ENCODE measurements at regions of chr17 and their contacts with region 1.

Region 1: DNA sequence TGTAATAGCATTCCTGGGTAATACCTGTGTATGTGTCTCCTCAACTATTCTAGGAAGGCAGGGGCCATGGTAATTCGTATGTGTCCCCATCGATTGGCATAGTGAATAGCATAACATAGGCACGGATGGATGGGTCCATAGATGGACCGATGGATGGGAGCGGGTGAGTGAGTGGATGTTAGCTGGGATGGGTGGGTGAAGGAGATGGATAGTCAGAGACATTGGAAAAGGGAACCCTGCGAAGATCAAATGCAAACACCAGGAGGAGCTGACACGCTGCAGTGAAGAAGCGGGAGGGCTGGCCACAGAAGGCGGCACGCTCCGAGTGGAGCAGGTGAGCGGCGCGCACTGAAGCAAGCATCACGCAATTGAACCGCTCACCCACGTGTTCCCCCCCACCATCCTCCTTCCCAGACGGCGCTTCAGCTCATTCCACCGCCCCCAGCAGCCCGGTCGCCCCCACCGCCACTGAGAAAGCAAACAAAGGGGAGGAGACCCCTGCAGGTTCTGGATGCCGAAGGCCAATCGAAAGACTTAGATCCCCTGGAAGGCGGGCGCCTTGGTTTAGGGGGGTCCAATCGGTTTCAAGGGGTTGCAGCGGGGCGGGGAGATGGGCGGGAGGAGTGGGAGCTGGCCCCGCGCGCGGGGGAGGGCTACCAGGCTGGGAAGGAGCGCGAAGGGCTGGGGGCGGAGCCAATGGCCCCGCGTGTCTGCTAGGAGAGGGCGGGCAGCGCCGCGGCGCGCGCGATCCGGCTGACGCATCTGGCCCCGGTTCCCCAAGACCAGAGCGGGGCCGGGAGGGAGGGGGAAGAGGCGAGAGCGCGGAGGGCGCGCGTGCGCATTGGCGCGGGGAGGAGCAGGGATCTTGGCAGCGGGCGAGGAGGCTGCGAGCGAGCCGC is at the start of gene ARRB2:
- DNase-seq: peak; percentile 93
- ATAC-seq: peak; percentile 87
- H3K4me3 Mint-ChIP-seq: peak within 1 kb of the TSS; percentile 86
- H3K27ac Mint-ChIP-seq: peak within 1 kb of the TSS; percentile 83
- H3K4me1 Mint-ChIP-seq: peaks cover 43% of the 10 kb centered on the region
- H3K27me3 Mint-ChIP-seq: no peaks in the 10 kb centered on the region
- CTCF ChIP-seq: peak; percentile 27
- total RNA-seq, gene ARRB2: 45.1 and 52.0 TPM in 2 replicates

Region 2: GRCh38 chr17:4161179-4161559 is 548.9 kb before region 1 on chr17:
- CTCF ChIA-PET with region 1: no interaction called
- POLR2A ChIA-PET with region 1: no interaction called
- intact Hi-C with region 1: no loop called
- DNase-seq: no peak
- ATAC-seq: no peak
- H3K4me3 Mint-ChIP-seq: no peak overlapping the region
- H3K27ac Mint-ChIP-seq: no peak overlapping the region
- H3K4me1 Mint-ChIP-seq: peaks cover 11% of the 10 kb centered on the region
- H3K27me3 Mint-ChIP-seq: no peaks in the 10 kb centered on the region
- CTCF ChIP-seq: no peak

Region 3: DNA sequence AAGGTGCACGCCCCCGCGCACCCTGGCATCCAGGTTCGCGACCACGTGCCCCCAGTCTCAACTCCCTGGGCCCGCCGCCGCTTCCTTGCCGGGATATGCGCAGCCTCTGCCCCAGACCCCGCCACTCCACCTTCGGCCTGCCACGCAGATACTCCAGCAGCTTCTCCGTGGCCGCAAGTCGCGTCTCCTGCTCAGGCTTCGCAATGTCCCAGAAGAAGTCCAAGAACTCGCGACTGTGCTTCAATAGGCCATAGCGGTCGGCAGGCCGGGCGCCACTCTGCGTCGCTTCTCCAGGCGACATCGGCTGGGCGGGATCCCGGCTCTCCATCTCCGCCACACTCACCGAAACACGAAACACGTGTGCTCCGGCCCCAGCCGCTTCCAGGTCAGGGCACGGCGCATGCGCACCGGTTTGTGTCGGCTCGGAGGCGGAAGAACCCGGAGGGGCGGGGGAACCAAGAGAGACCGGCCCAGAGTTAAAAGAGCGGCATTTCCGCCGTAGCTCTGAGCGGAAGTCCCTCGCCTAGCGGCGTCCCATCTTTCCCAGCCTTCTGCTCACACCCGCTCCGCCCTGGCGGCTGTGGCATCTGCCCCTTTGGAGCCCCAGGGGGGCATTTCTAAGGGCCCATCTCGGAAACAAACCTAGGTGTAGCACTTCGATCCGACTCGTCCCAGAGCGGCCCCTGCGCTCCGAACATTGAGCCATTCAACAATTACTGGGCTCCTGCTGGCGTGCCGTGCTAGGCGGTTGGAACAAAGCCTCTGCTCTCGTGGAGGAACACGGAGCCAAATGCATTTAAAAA is 154.8 kb before region 1 on chr17 and contains the start of gene MYBBP1A:
- CTCF ChIA-PET with region 1: no interaction called
- POLR2A ChIA-PET with region 1: no interaction called
- intact Hi-C with region 1: loop called (anchors 2 kb)
- DNase-seq: peak; percentile 94
- ATAC-seq: peak; percentile 95
- H3K4me3 Mint-ChIP-seq: peak within 1 kb of the TSS; percentile 96
- H3K27ac Mint-ChIP-seq: peak within 1 kb of the TSS; percentile 98
- H3K4me1 Mint-ChIP-seq: peaks cover 28% of the 10 kb centered on the region
- H3K27me3 Mint-ChIP-seq: no peaks in the 10 kb centered on the region
- CTCF ChIP-seq: no peak
- total RNA-seq, gene MYBBP1A: 90.3 and 108 TPM in 2 replicates

Region 4: DNA sequence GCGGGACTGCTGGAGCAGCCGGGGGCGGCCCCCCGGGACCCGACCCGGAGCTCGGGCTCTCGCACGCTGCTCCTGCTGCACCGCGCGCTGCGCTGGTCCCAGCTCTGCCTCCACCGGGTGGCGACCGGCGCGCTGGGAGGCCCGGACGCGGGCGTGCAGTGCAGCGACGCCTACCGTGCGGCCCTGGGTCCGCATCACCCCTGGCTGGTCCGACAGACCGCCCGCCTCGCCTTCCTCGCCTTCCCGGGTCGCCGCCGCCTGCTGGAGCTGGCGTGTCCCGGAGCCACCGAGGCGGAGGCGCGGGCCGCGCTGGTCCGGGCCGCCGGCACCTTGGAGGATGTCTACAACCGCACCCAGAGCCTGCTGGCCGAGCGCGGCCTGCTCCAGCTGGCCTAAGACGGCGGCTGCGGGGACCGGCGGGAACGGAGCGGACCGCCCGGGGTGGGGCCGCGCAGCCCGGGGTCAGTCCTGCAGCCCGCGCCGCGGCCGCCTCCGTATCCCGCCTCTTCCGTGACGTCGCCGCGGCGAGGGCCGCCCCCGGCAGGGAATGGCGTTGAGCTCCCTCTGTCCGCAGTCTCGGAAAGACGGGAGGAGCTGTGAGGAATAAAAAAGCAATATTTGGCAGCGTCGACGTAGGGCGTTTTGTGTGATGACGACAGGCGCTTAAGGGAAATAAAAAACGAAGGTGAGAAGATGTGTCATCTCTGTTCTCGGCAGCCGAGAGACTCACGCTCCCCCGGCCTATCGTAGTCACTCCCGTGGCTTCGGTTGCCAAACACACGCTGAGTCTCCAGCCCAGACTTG is 80.1 kb after region 1 on chr17:
- CTCF ChIA-PET with region 1: interaction called, 13 read pairs
- POLR2A ChIA-PET with region 1: interaction called, 17 read pairs
- intact Hi-C with region 1: loop called (anchors 1 kb)
- DNase-seq: peak; percentile 82
- ATAC-seq: peak; percentile 91
- H3K4me3 Mint-ChIP-seq: peak overlapping the region; percentile 89
- H3K27ac Mint-ChIP-seq: peak overlapping the region; percentile 80
- H3K4me1 Mint-ChIP-seq: peaks cover 19% of the 10 kb centered on the region
- H3K27me3 Mint-ChIP-seq: peaks cover 18% of the 10 kb centered on the region
- CTCF ChIP-seq: no peak

Region 5: DNA sequence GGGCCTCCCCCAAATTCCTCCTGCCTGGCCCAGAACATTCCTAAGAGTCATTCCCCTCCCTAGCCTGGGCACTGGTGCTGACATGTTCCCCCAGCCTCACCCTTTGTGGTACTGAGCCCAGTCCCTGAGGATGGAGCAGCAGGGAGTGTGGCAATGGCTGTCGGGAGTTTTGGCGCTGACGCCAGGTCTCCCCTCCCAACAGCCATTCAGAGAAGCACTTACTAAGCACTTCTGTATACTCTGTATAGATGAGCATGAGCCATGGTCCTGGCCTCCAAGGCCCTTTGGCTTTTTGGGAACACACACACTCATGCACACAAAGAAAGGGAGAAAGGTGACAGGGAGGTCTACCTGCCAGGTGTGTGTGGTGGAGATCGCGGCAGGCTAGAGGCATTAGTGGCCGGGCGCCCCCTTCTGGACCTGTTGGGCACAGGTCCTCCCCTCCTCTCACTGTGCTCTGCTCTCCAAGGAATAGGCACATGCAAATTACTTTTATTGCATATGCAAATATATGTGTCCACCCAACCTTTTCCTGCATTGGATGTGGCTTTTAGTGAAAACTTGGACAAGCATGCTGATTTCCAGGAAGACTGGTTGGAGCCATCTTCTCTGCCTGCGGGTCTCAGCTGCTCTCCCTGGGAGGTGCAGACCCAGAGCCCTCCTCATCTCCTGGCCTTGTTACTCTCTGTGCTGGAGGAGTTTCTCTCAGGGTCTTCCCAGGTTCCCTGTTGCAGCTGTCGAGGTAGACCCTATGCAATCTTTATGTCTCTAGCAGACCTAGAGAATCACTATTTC is 171.9 kb after region 1 on chr17:
- CTCF ChIA-PET with region 1: interaction called, 6 read pairs
- POLR2A ChIA-PET with region 1: no interaction called
- intact Hi-C with region 1: loop called (anchors 1 kb)
- DNase-seq: peak; percentile 50
- ATAC-seq: peak; percentile 93
- H3K4me3 Mint-ChIP-seq: no peak overlapping the region
- H3K27ac Mint-ChIP-seq: no peak overlapping the region
- H3K4me1 Mint-ChIP-seq: peaks cover 6% of the 10 kb centered on the region
- H3K27me3 Mint-ChIP-seq: no peaks in the 10 kb centered on the region
- CTCF ChIP-seq: peak; percentile 45

Region 6: DNA sequence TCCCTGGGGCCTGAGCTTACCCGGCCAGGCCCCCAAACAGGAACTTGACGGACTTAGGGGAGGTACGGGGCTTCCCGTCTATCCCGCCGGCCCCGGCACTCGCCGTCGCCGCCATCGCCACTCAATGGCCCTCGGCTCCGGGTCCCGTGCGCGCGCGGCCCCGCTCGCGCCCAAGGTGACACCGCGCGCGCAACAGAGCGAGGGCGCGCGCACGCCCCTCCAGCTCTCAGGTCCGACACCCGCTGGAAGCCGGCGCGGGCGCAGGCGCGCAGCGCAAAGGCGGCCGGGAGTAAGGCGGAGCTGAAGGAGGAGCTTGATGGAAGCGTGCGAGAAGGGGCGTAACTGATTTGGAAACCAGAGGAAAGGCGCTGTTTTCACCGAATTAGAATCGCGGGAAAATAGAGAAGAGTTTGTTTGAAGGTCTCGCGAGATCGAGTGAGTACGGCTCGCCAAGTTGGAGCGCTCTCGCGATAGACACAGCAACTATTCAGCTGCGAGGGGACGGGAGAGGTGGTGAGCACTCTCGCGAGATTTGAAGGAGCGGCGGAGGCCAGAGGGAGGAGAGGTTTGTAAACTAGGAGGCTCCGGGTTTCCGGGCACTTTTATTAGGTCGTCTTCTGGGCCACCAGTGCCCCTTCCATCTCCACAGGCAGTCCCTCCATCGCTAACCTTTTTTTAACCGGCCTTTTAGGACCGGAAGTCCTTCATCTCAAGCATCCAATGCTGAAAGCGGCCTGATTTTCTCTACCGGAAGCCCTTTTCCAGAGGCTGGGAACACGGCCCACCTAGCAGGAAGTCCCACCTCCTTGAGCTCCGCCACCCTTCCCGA is 230.0 kb after region 1 on chr17 and contains the starts of genes RNF167 and SLC25A11:
- CTCF ChIA-PET with region 1: no interaction called
- POLR2A ChIA-PET with region 1: interaction called, 4 read pairs
- intact Hi-C with region 1: loop called (anchors 2 kb)
- DNase-seq: peak; percentile 93
- ATAC-seq: peak; percentile 84
- H3K4me3 Mint-ChIP-seq: peak within 1 kb of the TSS; percentile 97
- H3K27ac Mint-ChIP-seq: peak within 1 kb of the TSS; percentile 98
- H3K4me1 Mint-ChIP-seq: peaks cover 69% of the 10 kb centered on the region
- H3K27me3 Mint-ChIP-seq: no peaks in the 10 kb centered on the region
- CTCF ChIP-seq: no peak
- total RNA-seq, gene RNF167: 93.3 and 108 TPM in 2 replicates
- total RNA-seq, gene SLC25A11: 35.3 and 35.8 TPM in 2 replicates

Region 7: GRCh38 chr17:5486204-5487124 is 776.4 kb after region 1 on chr17 and contains the start of gene MIS12:
- CTCF ChIA-PET with region 1: no interaction called
- POLR2A ChIA-PET with region 1: interaction called, 5 read pairs
- intact Hi-C with region 1: loop called (anchors 1 kb)
- DNase-seq: peak; percentile 84
- ATAC-seq: peak; percentile 87
- H3K4me3 Mint-ChIP-seq: peak within 1 kb of the TSS; percentile 94
- H3K27ac Mint-ChIP-seq: peak within 1 kb of the TSS; percentile 98
- H3K4me1 Mint-ChIP-seq: peaks cover 43% of the 10 kb centered on the region
- H3K27me3 Mint-ChIP-seq: no peaks in the 10 kb centered on the region
- CTCF ChIP-seq: no peak
- total RNA-seq, gene MIS12: 29.7 and 31.2 TPM in 2 replicates